Head of caudate nucleus (tissue), 42 donors: ENCODE measurements at regions of chr11 and their contacts with region 1.

Region 1: GRCh38 chr11:112289588-112290492 is 29.2 kb upstream of the PLET1 start:
- DNase-seq: peak; percentile 68 to 95 (median 89)

Region 2: GRCh38 chr11:112226831-112227401 is 62.9 kb before region 1 on chr11:
- intact Hi-C with region 1: no loop called
- DNase-seq: peak in 2 of 42 donors; percentile 10

Region 3: GRCh38 chr11:112555491-112556364 is 265.9 kb after region 1 on chr11:
- intact Hi-C with region 1: loop called (anchors 2 kb)
- DNase-seq: peak in 41 of 42 donors; percentile 46 to 92 (median 78)

Region 4: GRCh38 chr11:113289431-113290187 is 999.8 kb after region 1 on chr11:
- intact Hi-C with region 1: loop called (anchors 5 kb)
- DNase-seq: peak; percentile 52 to 90 (median 75)